GM18951 (cell line): ENCODE measurements at regions of chr12 and their contacts with region 1.

Region 1: GRCh38 chr12:120710031-120710804 is at the start of gene UNC119B:
- POLR2A ChIP-seq: peak; percentile 66

Region 2: DNA sequence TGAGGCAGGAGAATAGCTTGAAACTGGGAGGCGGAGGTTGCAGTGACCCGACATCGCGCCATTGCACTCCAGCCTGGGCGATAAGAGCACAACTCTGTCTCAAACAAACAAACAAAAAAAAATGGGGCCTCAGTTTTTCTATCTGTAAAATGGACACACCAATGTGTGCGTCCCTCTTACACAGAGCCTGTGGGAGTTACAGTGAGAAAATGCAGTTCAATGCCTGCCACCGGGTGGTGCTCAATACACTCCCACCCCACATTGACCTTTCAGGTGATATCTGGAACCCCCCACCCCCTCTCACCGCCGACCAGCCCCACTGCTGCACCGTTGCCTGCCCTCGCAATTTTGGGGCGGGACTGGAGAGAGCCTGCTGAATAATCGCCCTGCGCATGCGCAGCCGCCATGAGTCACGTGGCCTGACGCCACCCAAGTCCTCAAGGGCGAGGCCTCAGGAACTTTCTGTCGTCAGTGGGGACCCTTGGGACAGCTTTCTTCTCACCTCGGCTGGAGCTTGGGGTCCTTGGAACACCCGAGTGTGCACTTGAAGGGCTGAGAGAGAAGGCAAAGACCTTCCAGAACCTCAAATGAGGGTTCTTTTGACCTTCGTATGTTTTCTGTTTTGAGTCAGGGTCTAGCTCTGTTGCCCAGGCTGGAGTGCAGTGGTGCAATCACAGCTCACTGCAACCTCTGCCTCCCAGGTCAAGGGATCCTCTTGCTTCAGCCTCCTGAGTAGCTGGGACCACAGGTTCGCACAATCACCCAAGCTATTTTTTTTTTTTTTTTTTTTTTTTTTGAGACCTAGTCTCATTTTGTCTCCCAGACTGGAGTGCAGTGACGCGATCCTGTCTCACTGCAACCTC is 84.4 kb before region 1 on chr12:
- in situ Hi-C with region 1: no loop called
- POLR2A ChIP-seq: no peak

Region 3: DNA sequence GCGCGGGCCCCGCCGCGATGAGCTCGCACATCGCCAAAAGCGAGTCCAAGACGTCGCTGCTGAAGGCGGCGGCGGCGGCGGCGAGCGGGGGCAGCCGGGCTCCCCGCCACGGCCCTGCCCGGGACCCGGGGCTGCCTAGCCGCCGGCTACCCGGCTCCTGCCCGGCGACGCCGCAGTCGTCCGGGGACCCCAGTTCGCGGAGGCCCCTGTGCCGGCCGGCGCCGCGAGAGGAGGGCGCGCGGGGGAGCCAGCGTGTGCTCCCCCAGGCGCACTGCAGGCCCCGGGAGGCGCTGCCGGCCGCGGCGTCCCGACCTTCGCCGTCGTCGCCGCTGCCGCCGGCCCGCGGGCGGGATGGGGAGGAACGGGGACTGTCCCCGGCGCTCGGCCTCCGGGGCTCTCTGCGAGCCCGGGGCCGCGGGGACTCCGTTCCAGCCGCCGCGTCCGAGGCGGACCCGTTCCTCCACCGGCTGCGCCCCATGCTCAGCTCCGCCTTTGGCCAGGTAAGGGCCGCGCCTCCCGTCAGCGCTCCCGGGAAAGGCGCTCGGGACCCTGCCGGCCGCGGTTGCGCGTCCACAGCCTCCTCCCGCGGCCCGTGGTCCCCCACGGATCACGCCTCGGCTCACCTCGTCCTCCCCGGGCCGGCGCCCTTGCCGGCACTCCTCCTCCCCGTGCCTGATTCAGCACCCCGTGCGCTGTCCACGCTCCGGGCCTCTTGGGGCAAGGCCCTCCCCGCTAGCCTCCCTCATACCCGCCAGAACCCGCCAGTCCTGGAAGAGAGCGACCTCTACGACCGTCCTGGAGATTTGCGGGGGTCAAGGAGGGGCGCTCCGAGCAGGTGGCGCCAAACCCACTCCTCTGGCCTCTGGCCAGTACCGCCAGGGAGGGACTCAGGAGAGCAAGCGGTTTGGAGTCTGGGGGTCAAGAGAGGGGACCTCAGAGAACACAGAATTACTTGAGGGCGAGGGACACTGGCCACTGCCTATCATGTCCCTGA is 69.1 kb before region 1 on chr12:
- in situ Hi-C with region 1: loop called (anchors 10 kb)
- POLR2A ChIP-seq: no peak